ENCODE measurements at regions of chr11 and their contacts with region 1.

Region 1: DNA sequence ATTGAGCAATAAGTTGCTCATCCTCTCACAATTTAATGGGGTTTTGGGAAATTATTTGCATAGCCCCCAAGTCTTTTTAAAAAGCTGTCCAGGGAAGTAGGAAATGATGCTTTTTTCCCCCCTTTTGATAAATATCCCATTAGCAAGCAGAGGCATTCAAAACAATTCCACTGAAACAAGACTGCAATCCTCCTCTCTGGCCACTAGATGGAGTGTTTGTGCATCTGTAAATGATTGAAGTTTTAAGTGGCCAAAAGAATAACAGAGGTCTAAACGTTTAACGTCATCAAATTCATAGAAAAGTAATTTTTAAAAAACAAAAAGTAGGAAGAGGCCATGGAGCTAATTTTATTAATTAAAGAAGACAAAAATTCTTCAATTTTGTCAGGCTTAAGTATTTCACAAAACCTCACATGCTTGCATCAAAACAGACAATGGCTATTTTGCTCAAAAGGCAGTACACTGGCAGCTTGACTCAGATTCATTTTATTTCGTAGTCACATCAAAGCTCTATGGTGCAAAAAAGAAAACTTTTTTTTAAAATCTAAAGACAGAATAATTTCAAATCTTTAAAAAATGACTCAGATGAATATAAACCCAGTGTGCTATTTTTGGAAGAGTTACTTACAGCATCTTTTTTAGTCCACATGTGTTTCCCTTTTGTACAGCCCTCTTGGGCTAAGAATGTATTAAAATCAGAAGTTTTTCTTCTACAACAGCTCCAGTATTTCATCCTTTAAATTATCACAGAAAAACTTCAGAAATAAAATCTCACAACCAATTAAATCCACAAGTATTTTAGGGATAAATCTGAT is 17.8 kb downstream of the CHORDC1 start:
- DNase-seq: no peak
- H3K4me3 ChIP-seq: no peak overlapping the region
- CTCF ChIP-seq: peak; percentile 76

Region 2: GRCh38 chr11:90168571-90168970 is 36.5 kb before region 1 on chr11:
- CTCF ChIA-PET with region 1: no interaction called
- POLR2A ChIA-PET with region 1: no interaction called
- DNase-seq: no peak
- H3K4me3 ChIP-seq: no peak overlapping the region
- CTCF ChIP-seq: no peak

Region 3: DNA sequence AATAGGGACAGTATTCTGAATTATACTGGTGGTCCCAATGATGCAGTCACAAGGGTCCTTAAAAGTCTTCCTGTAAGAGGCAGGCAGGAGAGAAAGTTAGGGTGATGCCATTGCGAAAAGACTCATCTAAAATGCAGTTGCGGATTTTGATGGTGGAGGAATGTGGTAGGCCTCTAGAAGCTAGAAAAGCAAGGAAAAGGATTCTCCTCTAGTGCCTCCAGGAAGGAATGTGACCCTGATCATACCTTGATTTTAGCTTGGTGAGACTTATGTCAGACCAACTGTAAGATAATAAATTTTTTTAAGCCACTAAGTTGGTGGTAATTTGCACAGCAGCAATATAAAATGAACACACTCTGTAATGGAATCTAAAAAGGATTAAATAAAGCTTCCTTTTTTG is 16.0 kb before region 1 on chr11:
- CTCF ChIA-PET with region 1: interaction called, 26 read pairs
- POLR2A ChIA-PET with region 1: no interaction called
- DNase-seq: no peak
- H3K4me3 ChIP-seq: no peak overlapping the region
- CTCF ChIP-seq: no peak

Region 4: DNA sequence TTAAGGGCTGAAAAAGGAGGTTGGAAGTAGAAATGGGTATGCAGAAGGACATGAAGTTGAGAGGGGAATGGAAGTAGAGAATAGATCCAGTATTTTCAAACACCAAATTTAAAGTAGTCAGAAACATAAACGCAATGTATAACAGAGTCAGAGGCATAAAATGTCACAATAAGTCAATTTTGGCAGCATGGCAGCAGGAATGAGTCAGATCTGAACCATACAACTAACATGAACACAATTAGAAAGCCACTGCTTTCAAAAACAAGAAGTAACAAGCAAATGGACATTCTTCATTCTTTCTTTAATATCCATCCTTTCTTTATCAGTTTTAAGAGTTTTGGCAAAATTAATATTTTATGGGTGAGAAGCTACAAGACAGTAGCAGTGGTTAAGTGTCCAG is 15.4 kb after region 1 on chr11:
- CTCF ChIA-PET with region 1: interaction called, 34 read pairs
- POLR2A ChIA-PET with region 1: interaction called, 3 read pairs
- DNase-seq: no peak
- H3K4me3 ChIP-seq: no peak overlapping the region
- CTCF ChIP-seq: no peak